ENCODE measurements at regions of chr12 and their contacts with region 1.

Region 1: GRCh38 chr12:14774906-14775762 is 28.1 kb downstream of the WBP11 start:
- DNase-seq: peak; percentile 58
- H3K4me3 Mint-ChIP-seq: peak overlapping the region; percentile 95
- H3K27ac Mint-ChIP-seq: peak overlapping the region; percentile 94
- H3K4me1 Mint-ChIP-seq: peaks cover 36% of the 10 kb centered on the region
- H3K27me3 Mint-ChIP-seq: no peaks in the 10 kb centered on the region

Region 2: DNA sequence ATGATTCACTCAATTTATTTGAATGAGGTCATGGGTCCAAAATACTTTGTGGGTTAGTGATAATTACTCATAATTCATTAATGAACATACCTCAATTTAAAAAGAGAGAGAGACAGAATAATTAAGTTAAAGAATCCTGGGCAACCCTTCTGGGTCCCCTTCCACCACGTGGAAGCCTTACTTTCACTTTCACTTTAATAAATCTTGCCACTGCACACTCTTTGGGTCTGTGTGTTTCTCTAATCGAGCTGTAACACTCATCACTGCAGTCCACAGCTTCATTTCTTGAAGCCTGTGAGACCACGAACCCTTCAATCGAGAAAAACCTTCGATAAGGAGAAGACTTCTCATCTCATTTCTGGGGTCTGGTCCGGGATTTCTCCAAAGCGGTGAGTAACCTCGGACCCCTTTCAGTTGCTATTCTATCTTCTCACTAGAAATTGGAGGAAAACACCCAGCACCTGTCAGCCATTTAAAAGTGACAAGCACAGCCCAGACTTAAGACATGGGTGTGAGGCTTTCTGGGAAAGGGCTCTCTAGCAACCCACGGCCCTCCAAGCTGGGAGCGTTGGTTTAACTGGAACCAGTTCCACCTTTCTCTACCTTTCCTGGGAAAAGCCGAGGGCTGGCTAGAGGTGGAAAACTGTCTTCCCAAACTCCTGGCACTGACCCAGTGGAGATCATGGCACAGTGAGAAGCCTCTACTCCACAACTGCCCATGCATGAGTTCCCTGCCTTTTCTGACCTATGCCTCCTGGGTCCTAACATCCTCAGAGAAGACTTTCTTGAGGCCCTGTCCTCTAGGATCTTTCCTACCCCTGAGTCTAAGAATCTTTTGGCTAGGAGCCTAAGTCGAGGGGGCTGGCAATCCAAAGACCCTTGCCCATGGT is 558.5 kb before region 1 on chr12:
- CTCF ChIA-PET with region 1: no interaction called
- intact Hi-C with region 1: loop called (anchors 1 kb)
- DNase-seq: no peak
- H3K4me3 Mint-ChIP-seq: no peak overlapping the region
- H3K27ac Mint-ChIP-seq: peak overlapping the region; percentile 70
- H3K4me1 Mint-ChIP-seq: peaks cover 24% of the 10 kb centered on the region
- H3K27me3 Mint-ChIP-seq: no peaks in the 10 kb centered on the region

Region 3: DNA sequence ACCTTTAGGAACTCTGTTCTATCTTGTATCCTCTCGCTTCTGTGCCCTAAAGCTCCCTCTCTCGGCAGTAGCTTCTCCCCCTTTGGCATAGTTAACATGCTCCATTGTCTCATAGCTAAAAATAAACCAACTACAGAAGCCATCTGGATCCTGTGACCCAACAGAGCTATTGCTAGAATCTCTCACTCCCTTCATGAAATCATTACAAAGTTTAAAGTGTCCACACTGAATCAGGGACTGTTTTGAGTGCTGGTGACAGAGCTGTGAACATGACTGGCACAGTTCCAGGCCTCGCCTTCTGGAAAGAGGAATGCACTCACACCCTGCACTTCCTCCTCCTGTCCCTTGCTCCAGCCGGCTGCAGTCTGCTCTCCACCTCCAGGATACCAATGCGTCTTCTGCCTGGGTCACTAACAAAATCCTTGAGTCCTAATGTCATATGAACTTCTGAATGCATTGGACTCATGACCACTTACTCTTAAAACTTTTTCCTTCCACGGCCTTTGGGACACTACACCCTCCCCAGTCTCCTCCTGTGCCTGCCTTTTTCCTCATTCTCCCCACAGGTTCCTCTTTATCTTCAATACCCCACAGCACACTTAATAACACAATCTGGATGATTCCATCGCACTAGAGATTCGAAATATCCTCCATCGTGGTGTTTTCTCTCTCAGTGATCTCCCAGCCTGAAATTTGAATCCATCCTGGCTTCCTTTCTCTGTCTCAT is 220.7 kb before region 1 on chr12:
- CTCF ChIA-PET with region 1: no interaction called
- intact Hi-C with region 1: no loop called
- DNase-seq: no peak
- H3K4me3 Mint-ChIP-seq: no peak overlapping the region
- H3K27ac Mint-ChIP-seq: no peak overlapping the region
- H3K4me1 Mint-ChIP-seq: peaks cover 3% of the 10 kb centered on the region
- H3K27me3 Mint-ChIP-seq: peaks cover 5% of the 10 kb centered on the region

Region 4: GRCh38 chr12:14803011-14803829 is 28.1 kb after region 1 on chr12 and contains the starts of genes C12orf60 and WBP11:
- CTCF ChIA-PET with region 1: interaction called, 6 read pairs
- intact Hi-C with region 1: loop called (anchors 1 kb)
- DNase-seq: peak; percentile 94
- H3K4me3 Mint-ChIP-seq: no peak within 1 kb of the TSS
- H3K27ac Mint-ChIP-seq: no peak within 1 kb of the TSS
- H3K4me1 Mint-ChIP-seq: peaks cover 34% of the 10 kb centered on the region
- H3K27me3 Mint-ChIP-seq: no peaks in the 10 kb centered on the region
- total RNA-seq, gene C12orf60: 2.0 to 3.1 TPM
- total RNA-seq, gene WBP11: 105 to 115 TPM

Region 5: GRCh38 chr12:14824012-14824634 is 49.0 kb after region 1 on chr12:
- CTCF ChIA-PET with region 1: no interaction called
- intact Hi-C with region 1: loop called (anchors 1 kb)
- DNase-seq: no peak
- H3K4me3 Mint-ChIP-seq: no peak overlapping the region
- H3K27ac Mint-ChIP-seq: no peak overlapping the region
- H3K4me1 Mint-ChIP-seq: peaks cover 22% of the 10 kb centered on the region
- H3K27me3 Mint-ChIP-seq: peaks cover 1% of the 10 kb centered on the region

Region 6: GRCh38 chr12:14910090-14910915 is 135.2 kb after region 1 on chr12:
- CTCF ChIA-PET with region 1: no interaction called
- intact Hi-C with region 1: loop called (anchors 1 kb)
- DNase-seq: peak; percentile 59
- H3K4me3 Mint-ChIP-seq: peak overlapping the region; percentile 22
- H3K27ac Mint-ChIP-seq: peak overlapping the region; percentile 90
- H3K4me1 Mint-ChIP-seq: peaks cover 44% of the 10 kb centered on the region
- H3K27me3 Mint-ChIP-seq: no peaks in the 10 kb centered on the region

Measured in activated naive CD4-positive, alpha-beta T cell treated with anti-CD3 and anti-CD28 coated beads for 36 hours (primary cell).